AG04450 (cell line): ENCODE measurements at regions of chr17 and their contacts with region 1.

Region 1: GRCh38 chr17:74379495-74380085 is 12.3 kb downstream of the GPR142 start:
- DNase-seq: peak; percentile 27
- H3K4me3 ChIP-seq: no peak overlapping the region
- H3K27ac ChIP-seq: no peak overlapping the region
- H3K27me3 ChIP-seq: no peaks in the 10 kb centered on the region
- CTCF ChIP-seq: peak; percentile 81

Region 2: GRCh38 chr17:74368092-74369081 is 11.2 kb before region 1 on chr17:
- CTCF ChIA-PET with region 1: interaction called, 17 read pairs
- POLR2A ChIA-PET with region 1: no interaction called
- DNase-seq: no peak
- H3K4me3 ChIP-seq: no peak overlapping the region
- H3K27ac ChIP-seq: no peak overlapping the region
- H3K27me3 ChIP-seq: peaks cover 2% of the 10 kb centered on the region
- CTCF ChIP-seq: peak; percentile 89

Region 3: GRCh38 chr17:74573169-74573568 is 193.6 kb after region 1 on chr17:
- CTCF ChIA-PET with region 1: no interaction called
- POLR2A ChIA-PET with region 1: no interaction called
- DNase-seq: no peak
- H3K4me3 ChIP-seq: no peak overlapping the region
- H3K27ac ChIP-seq: no peak overlapping the region
- H3K27me3 ChIP-seq: no peaks in the 10 kb centered on the region
- CTCF ChIP-seq: no peak